Naive thymus-derived CD4-positive, alpha-beta T cell (primary cell): ENCODE measurements at regions of chr15 and their contacts with region 1.

Region 1: GRCh38 chr15:76905013-76905839 is at the start of gene SCAPER:
- DNase-seq: peak; percentile 84 to 94 (median 90)
- ATAC-seq: peak; percentile 95
- H3K4me3 ChIP-seq: peak within 1 kb of the TSS; percentile 64
- H3K4me3 Mint-ChIP-seq: peak within 1 kb of the TSS; percentile 86 to 96 (median 94)
- H3K27ac ChIP-seq: peak within 1 kb of the TSS; percentile 84
- H3K27ac Mint-ChIP-seq: peak within 1 kb of the TSS; percentile 93 to 99 (median 97)
- H3K4me1 ChIP-seq: peaks cover 8 to 26% of the 10 kb centered on the region in 2 donors
- H3K4me1 Mint-ChIP-seq: peaks cover 18 to 43% (median 36%) of the 10 kb centered on the region in 7 donors
- H3K27me3 ChIP-seq: no peaks in the 10 kb centered on the region
- H3K27me3 Mint-ChIP-seq: no peaks in the 10 kb centered on the region
- total RNA-seq, gene SCAPER: 25.1 to 56.9 (median 54.7) TPM

Region 2: DNA sequence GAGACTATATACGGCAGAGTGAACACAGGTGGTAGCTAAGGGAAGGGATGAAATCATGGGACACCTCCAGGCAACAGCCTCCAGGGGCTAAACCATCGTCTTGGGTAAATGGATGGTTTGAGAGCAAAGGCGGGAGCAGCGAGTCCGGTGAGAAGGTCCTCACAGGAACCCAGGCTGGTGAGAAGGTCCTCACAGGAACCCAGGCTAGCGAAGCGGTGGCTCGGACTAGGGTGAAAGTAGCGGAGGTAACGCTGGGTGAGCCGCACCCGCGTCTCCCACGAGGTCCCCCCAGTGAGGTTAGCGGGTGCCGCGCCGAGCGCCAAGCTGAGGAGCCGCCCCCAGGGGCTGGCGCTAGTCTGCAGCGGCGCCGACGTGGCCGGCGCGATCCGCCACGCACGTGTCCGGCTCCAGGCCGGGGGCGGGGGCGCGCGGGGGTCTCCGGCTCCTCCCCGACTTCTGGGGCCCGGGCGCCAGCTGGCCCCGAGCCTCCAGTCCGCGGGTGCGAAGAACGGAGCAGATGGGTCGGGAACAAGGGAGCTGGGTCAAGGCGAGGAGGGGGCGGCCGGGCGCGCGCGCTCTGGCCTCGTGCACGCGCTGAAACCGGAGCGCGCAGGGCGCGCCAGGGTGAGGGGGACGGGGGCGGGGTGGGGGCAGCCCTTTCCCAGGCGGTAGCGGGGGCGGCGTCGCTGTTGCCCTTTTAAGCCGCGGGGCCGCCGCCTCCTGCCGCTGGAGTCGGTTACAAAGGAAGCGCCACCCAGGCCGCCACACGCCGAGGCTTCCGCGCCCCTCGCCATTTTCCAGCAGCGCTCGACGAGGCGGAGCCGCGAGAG is 1062.3 kb before region 1 on chr15 and contains the start of gene UBE2Q2:
- CTCF ChIA-PET with region 1: no interaction called
- POLR2A ChIA-PET with region 1: no interaction called
- intact Hi-C with region 1: loop called in 1 of 2 experiments (anchors 10 kb)
- DNase-seq: peak; percentile 45 to 78 (median 67)
- ATAC-seq: peak; percentile 75
- H3K4me3 ChIP-seq: peak within 1 kb of the TSS; percentile 68
- H3K4me3 Mint-ChIP-seq: peak within 1 kb of the TSS; percentile 85 to 99 (median 96)
- H3K27ac ChIP-seq: peak within 1 kb of the TSS; percentile 76
- H3K27ac Mint-ChIP-seq: peak within 1 kb of the TSS; percentile 85 to 97 (median 92)
- H3K4me1 ChIP-seq: peaks cover 20 to 30% of the 10 kb centered on the region in 2 donors
- H3K4me1 Mint-ChIP-seq: peaks cover 37 to 50% (median 45%) of the 10 kb centered on the region in 7 donors
- H3K27me3 ChIP-seq: no peaks in the 10 kb centered on the region
- H3K27me3 Mint-ChIP-seq: peaks cover 0 to 20% (median 0%) of the 10 kb centered on the region in 5 donors
- total RNA-seq, gene UBE2Q2: 28.2 to 32.1 (median 28.8) TPM

Region 3: GRCh38 chr15:76576523-76577279 is 328.5 kb before region 1 on chr15:
- CTCF ChIA-PET with region 1: no interaction called
- POLR2A ChIA-PET with region 1: no interaction called
- intact Hi-C with region 1: no loop called
- DNase-seq: no peak
- ATAC-seq: no peak
- H3K4me3 ChIP-seq: no peak overlapping the region
- H3K4me3 Mint-ChIP-seq: no peak overlapping the region
- H3K27ac ChIP-seq: no peak overlapping the region
- H3K27ac Mint-ChIP-seq: peak overlapping the region in 1 of 9 donors; percentile 46
- H3K4me1 ChIP-seq: no peaks in the 10 kb centered on the region
- H3K4me1 Mint-ChIP-seq: peaks cover 0 to 30% (median 8%) of the 10 kb centered on the region in 7 donors
- H3K27me3 ChIP-seq: no peaks in the 10 kb centered on the region
- H3K27me3 Mint-ChIP-seq: no peaks in the 10 kb centered on the region

Region 4: DNA sequence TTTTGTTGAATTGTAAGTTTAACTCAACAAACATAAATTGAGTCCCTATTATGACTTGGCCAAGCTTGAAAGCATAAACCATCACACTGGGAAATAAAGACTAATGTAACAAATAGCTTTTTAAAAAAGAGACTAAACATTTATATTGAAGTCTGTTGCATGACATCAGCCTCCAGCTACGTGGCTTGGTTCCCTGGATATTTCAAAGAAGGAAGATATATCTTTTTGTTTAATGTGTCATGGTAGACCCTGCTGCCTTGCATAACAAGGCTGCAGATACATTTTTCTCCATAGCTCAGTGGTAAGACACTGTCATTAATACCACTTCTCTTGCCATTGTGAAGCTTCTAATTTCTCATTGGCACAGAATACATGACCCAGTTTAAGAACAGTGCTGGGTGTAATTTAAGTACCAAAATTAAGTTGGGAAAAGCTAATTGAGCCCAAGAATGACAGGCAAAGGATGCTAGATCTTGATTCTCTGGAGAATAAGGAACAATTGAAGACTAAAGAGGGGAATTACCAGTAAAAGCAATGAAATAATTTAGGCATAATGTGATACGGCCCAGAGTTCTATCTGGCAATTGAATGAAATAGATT is 40.4 kb after region 1 on chr15:
- CTCF ChIA-PET with region 1: interaction called, 3 read pairs
- POLR2A ChIA-PET with region 1: no interaction called
- intact Hi-C with region 1: loop called in 1 of 2 experiments (anchors 5 kb)
- DNase-seq: no peak
- ATAC-seq: no peak
- H3K4me3 ChIP-seq: no peak overlapping the region
- H3K4me3 Mint-ChIP-seq: no peak overlapping the region
- H3K27ac ChIP-seq: no peak overlapping the region
- H3K27ac Mint-ChIP-seq: peak overlapping the region in 3 of 9 donors; percentile 5 to 51 (median 42)
- H3K4me1 ChIP-seq: no peaks in the 10 kb centered on the region
- H3K4me1 Mint-ChIP-seq: peaks cover 3 to 17% (median 10%) of the 10 kb centered on the region in 7 donors
- H3K27me3 ChIP-seq: no peaks in the 10 kb centered on the region
- H3K27me3 Mint-ChIP-seq: no peaks in the 10 kb centered on the region

Region 5: GRCh38 chr15:77013776-77014131 is 108.5 kb after region 1 on chr15:
- CTCF ChIA-PET with region 1: no interaction called
- POLR2A ChIA-PET with region 1: interaction called, 4 read pairs
- intact Hi-C with region 1: loop called in 1 of 2 experiments (anchors 5 kb)
- DNase-seq: peak in 5 of 9 donors; percentile 45 to 82 (median 49)
- ATAC-seq: peak; percentile 73
- H3K4me3 ChIP-seq: peak overlapping the region; percentile 43
- H3K4me3 Mint-ChIP-seq: peak overlapping the region; percentile 64 to 91 (median 77)
- H3K27ac ChIP-seq: peak overlapping the region; percentile 58
- H3K27ac Mint-ChIP-seq: peak overlapping the region; percentile 76 to 97 (median 95)
- H3K4me1 ChIP-seq: peaks cover 62 to 99% of the 10 kb centered on the region in 2 donors
- H3K4me1 Mint-ChIP-seq: peaks cover 58 to 93% (median 75%) of the 10 kb centered on the region in 7 donors
- H3K27me3 ChIP-seq: no peaks in the 10 kb centered on the region
- H3K27me3 Mint-ChIP-seq: no peaks in the 10 kb centered on the region

Region 6: GRCh38 chr15:77031376-77032050 is 126.3 kb after region 1 on chr15:
- CTCF ChIA-PET with region 1: no interaction called
- POLR2A ChIA-PET with region 1: no interaction called
- intact Hi-C with region 1: loop called in 1 of 2 experiments (anchors 1 kb)
- DNase-seq: peak in 4 of 9 donors; percentile 5 to 40 (median 26)
- ATAC-seq: peak; percentile 60
- H3K4me3 ChIP-seq: no peak overlapping the region
- H3K4me3 Mint-ChIP-seq: no peak overlapping the region
- H3K27ac ChIP-seq: no peak overlapping the region
- H3K27ac Mint-ChIP-seq: peak overlapping the region in 4 of 9 donors; percentile 36 to 59 (median 42)
- H3K4me1 ChIP-seq: no peaks in the 10 kb centered on the region
- H3K4me1 Mint-ChIP-seq: peaks cover 0 to 21% (median 6%) of the 10 kb centered on the region in 7 donors
- H3K27me3 ChIP-seq: no peaks in the 10 kb centered on the region
- H3K27me3 Mint-ChIP-seq: no peaks in the 10 kb centered on the region

Region 7: DNA sequence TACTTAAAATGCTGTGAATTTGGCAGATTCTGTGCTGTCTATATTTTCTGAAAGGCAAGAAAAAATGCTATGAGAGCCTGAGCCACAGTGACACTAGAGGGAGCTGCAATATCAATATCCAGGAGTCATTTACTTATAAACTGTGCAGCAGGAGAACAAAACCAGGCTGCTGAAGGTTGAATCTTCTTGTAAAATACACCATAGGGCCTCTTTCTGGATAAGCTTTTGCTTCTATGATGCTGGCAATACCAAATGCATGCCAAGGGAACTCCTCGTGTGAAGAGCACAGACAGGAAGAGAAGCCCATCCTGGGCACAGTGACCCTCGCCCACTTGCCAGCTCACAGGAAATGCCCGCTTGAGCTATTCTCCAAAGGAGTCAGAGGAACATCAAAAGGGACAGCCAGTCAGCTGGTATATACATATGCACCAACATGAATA is 213.7 kb after region 1 on chr15:
- CTCF ChIA-PET with region 1: no interaction called
- POLR2A ChIA-PET with region 1: no interaction called
- intact Hi-C with region 1: loop called in 1 of 2 experiments (anchors 1 kb)
- DNase-seq: peak in 7 of 9 donors; percentile 19 to 63 (median 47)
- ATAC-seq: peak; percentile 70
- H3K4me3 ChIP-seq: no peak overlapping the region
- H3K4me3 Mint-ChIP-seq: no peak overlapping the region
- H3K27ac ChIP-seq: no peak overlapping the region
- H3K27ac Mint-ChIP-seq: no peak overlapping the region
- H3K4me1 ChIP-seq: no peaks in the 10 kb centered on the region
- H3K4me1 Mint-ChIP-seq: peaks cover 0 to 12% (median 6%) of the 10 kb centered on the region in 7 donors
- H3K27me3 ChIP-seq: no peaks in the 10 kb centered on the region
- H3K27me3 Mint-ChIP-seq: no peaks in the 10 kb centered on the region

Region 8: GRCh38 chr15:77543159-77543882 is 638.1 kb after region 1 on chr15:
- CTCF ChIA-PET with region 1: no interaction called
- POLR2A ChIA-PET with region 1: no interaction called
- intact Hi-C with region 1: loop called in 1 of 2 experiments (anchors 1 kb)
- DNase-seq: peak; percentile 49 to 82 (median 71)
- ATAC-seq: peak; percentile 89
- H3K4me3 ChIP-seq: peak overlapping the region; percentile 80
- H3K4me3 Mint-ChIP-seq: peak overlapping the region; percentile 71 to 83 (median 78)
- H3K27ac ChIP-seq: peak overlapping the region; percentile 30
- H3K27ac Mint-ChIP-seq: peak overlapping the region in 6 of 9 donors; percentile 38 to 69 (median 48)
- H3K4me1 ChIP-seq: peaks cover 6% of the 10 kb centered on the region in 2 donors
- H3K4me1 Mint-ChIP-seq: peaks cover 0 to 12% (median 6%) of the 10 kb centered on the region in 7 donors
- H3K27me3 ChIP-seq: no peaks in the 10 kb centered on the region
- H3K27me3 Mint-ChIP-seq: peaks cover 0 to 12% (median 4%) of the 10 kb centered on the region in 5 donors